ENCODE measurements at regions of chr20 and their contacts with region 1.

Region 1: DNA sequence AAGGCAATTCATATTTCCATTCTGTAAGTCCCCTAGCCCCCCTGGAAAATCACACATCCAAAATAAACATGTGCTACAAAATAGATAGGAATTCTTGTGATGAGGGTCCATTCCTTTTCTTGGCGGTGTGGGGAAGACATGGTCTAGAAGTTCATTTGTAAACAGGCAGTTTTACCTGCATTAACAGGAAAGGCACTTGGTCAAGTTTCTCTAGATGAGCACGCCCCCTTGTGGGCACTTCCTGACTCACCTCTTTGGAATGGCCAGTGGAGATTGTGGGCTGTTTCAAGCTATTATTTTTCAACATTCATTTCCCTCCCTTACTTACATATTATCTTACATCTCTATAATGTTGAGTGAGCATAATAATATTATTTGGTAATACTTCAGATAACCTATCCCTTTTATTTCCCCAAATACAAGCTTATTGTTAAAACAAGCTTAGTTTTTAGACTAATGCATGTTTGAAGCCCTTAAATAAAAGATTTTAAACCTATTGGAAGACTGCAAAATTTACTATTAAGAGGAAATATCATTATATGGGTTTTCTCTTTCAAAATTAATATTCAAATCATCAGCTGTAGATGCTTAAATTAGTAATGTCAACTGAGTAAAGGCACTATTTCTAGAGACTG is 92.1 kb downstream of the TASP1 start:
- DNase-seq: peak; percentile 58 to 89
- H3K4me3 ChIP-seq: no peak overlapping the region
- H3K4me1 ChIP-seq: peaks cover 2% of the 10 kb centered on the region; the same call in 1 of the 2 replicates
- H3K27me3 ChIP-seq: no peaks in the 10 kb centered on the region

Region 2: DNA sequence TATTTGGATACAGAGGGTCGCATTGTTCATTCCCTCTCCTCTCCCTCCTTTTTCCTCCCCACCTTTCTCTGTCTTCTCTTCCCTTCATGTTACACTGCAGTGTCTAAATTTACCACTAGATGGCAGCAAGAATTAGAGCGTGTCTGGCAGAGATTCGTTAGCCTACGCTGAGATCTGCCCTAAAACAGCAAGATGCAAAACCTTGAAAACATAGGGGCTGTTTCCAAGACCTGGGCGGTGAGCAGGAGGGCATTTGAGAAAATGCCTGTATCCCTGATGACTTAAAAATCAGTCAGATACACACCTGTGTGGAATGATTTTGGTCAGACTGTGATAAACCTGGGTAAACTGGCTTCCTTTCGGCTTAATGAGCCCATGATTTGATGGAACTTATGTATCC is 427.0 kb before region 1 on chr20:
- in situ Hi-C with region 1: loop called (anchors 10 kb)
- DNase-seq: peak; percentile 55 to 65
- H3K4me3 ChIP-seq: no peak overlapping the region
- H3K4me1 ChIP-seq: no peaks in the 10 kb centered on the region
- H3K27me3 ChIP-seq: no peaks in the 10 kb centered on the region

Region 3: DNA sequence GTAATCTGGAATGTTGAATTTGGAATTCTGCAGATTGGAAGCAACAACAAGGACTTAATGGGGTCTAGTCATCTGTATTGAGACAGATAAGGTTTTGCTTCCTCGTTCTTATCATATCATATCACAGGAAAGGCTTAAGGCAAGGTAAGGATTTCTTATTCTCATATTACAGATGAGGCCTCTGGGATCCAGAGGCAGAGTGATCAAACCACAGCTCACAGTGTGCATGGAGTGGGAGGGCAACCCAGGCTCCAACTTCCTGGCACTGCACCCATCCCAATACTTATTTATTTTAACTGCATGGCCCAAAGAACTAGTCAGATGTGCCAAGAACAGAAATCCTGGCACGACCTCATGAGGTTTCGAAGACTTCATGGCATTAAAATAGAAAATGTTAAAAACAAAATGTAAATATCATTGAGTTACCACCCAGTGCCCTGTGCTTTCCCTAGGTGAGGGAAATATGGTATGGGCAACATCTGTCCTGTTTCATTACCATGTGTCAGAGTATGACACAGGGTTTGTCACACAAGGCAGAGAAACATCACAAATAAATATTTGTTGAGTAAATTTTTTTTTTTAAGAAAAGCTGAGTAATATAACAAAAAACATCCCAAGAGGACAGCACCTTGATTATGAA is 133.7 kb before region 1 on chr20:
- in situ Hi-C with region 1: no loop called
- DNase-seq: no peak
- H3K4me3 ChIP-seq: no peak overlapping the region
- H3K4me1 ChIP-seq: no peaks in the 10 kb centered on the region
- H3K27me3 ChIP-seq: no peaks in the 10 kb centered on the region

Region 4: DNA sequence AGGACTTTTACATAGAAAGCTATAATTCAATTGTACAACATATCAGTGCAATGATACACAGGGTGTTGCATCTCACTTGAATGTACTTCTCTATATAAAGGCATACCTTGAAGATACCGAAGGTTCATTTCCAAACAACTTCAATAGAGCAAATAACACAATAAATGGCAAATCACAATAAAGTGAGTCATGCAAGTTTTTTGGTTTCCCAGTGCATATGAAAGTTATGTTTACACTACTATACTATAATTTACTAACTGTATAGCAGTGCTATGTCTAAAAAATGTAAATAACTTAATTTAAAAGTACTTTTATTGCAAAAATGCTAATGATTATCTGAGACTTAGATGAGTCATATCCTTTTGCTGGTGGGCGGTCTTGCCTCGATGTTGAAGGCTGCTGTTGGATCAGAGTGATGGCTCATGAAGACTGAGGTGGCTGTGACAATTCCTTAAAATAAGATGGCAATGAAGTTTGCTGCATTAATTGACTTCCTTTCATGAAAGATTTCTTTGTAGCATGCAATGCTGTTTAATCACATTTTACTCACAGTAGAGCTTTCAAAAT is 96.7 kb before region 1 on chr20:
- in situ Hi-C with region 1: no loop called
- DNase-seq: no peak
- H3K4me3 ChIP-seq: no peak overlapping the region
- H3K4me1 ChIP-seq: no peaks in the 10 kb centered on the region
- H3K27me3 ChIP-seq: no peaks in the 10 kb centered on the region

Region 5: GRCh38 chr20:14142171-14142570 is 595.6 kb after region 1 on chr20:
- in situ Hi-C with region 1: no loop called
- DNase-seq: peak; percentile 16 to 19
- H3K4me3 ChIP-seq: no peak overlapping the region
- H3K4me1 ChIP-seq: no peaks in the 10 kb centered on the region
- H3K27me3 ChIP-seq: no peaks in the 10 kb centered on the region

Measured in HAP-1 (cell line).